ENCODE measurements at regions of chr7 and their contacts with region 1.

Region 1: GRCh38 chr7:3065724-3066143 is 22.1 kb upstream of the CARD11 start:
- DNase-seq: peak; percentile 82
- ATAC-seq: peak; percentile 39
- H3K4me3 ChIP-seq: no peak overlapping the region
- H3K4me3 Mint-ChIP-seq: peak overlapping the region; percentile 47
- H3K27ac ChIP-seq: peak overlapping the region in 1 of 2 donors; percentile 15
- H3K27ac Mint-ChIP-seq: peak overlapping the region; percentile 83
- H3K4me1 ChIP-seq: peaks cover 57 to 62% of the 10 kb centered on the region in 2 donors
- H3K4me1 Mint-ChIP-seq: peaks cover 69% of the 10 kb centered on the region
- H3K27me3 ChIP-seq: no peaks in the 10 kb centered on the region
- H3K27me3 Mint-ChIP-seq: no peaks in the 10 kb centered on the region
- CTCF ChIP-seq: peak; percentile 74

Region 2: GRCh38 chr7:2471396-2471795 is 594.3 kb before region 1 on chr7:
- CTCF ChIA-PET with region 1: no interaction called
- POLR2A ChIA-PET with region 1: no interaction called
- intact Hi-C with region 1: no loop called
- DNase-seq: no peak
- ATAC-seq: no peak
- H3K4me3 ChIP-seq: no peak overlapping the region
- H3K4me3 Mint-ChIP-seq: no peak overlapping the region
- H3K27ac ChIP-seq: no peak overlapping the region
- H3K27ac Mint-ChIP-seq: no peak overlapping the region
- H3K4me1 ChIP-seq: peaks cover 0 to 5% of the 10 kb centered on the region in 2 donors
- H3K4me1 Mint-ChIP-seq: peaks cover 4% of the 10 kb centered on the region
- H3K27me3 ChIP-seq: peaks cover 0 to 12% (median 2%) of the 10 kb centered on the region in 4 experiments
- H3K27me3 Mint-ChIP-seq: peaks cover 9% of the 10 kb centered on the region
- CTCF ChIP-seq: no peak

Region 3: GRCh38 chr7:2954433-2954853 is 111.3 kb before region 1 on chr7:
- CTCF ChIA-PET with region 1: interaction called, 3 read pairs
- POLR2A ChIA-PET with region 1: interaction called, 5 read pairs
- intact Hi-C with region 1: loop called (anchors 5 kb)
- DNase-seq: no peak
- ATAC-seq: peak; percentile 49
- H3K4me3 ChIP-seq: no peak overlapping the region
- H3K4me3 Mint-ChIP-seq: peak overlapping the region; percentile 26
- H3K27ac ChIP-seq: peak overlapping the region in 1 of 2 donors; percentile 63
- H3K27ac Mint-ChIP-seq: peak overlapping the region; percentile 74
- H3K4me1 ChIP-seq: peaks cover 37% of the 10 kb centered on the region in 2 donors
- H3K4me1 Mint-ChIP-seq: peaks cover 59% of the 10 kb centered on the region
- H3K27me3 ChIP-seq: no peaks in the 10 kb centered on the region
- H3K27me3 Mint-ChIP-seq: no peaks in the 10 kb centered on the region
- CTCF ChIP-seq: no peak

Region 4: GRCh38 chr7:3092468-3092867 is 26.7 kb after region 1 on chr7:
- CTCF ChIA-PET with region 1: interaction called, 22 read pairs
- POLR2A ChIA-PET with region 1: interaction called, 6 read pairs
- intact Hi-C with region 1: loop called (anchors 1 kb)
- DNase-seq: peak; percentile 83
- ATAC-seq: peak; percentile 86
- H3K4me3 ChIP-seq: peak overlapping the region in 1 of 5 experiments; percentile 20
- H3K4me3 Mint-ChIP-seq: peak overlapping the region; percentile 38
- H3K27ac ChIP-seq: peak overlapping the region; percentile 54 to 76
- H3K27ac Mint-ChIP-seq: peak overlapping the region; percentile 85
- H3K4me1 ChIP-seq: peaks cover 37 to 50% of the 10 kb centered on the region in 2 donors
- H3K4me1 Mint-ChIP-seq: peaks cover 45% of the 10 kb centered on the region
- H3K27me3 ChIP-seq: no peaks in the 10 kb centered on the region
- H3K27me3 Mint-ChIP-seq: no peaks in the 10 kb centered on the region
- CTCF ChIP-seq: no peak

Region 5: GRCh38 chr7:3154912-3155494 is 89.3 kb after region 1 on chr7:
- CTCF ChIA-PET with region 1: interaction called, 74 read pairs
- POLR2A ChIA-PET with region 1: no interaction called
- intact Hi-C with region 1: no loop called
- DNase-seq: peak; percentile 78
- ATAC-seq: peak; percentile 72
- H3K4me3 ChIP-seq: no peak overlapping the region
- H3K4me3 Mint-ChIP-seq: no peak overlapping the region
- H3K27ac ChIP-seq: no peak overlapping the region
- H3K27ac Mint-ChIP-seq: no peak overlapping the region
- H3K4me1 ChIP-seq: peaks cover 22 to 30% of the 10 kb centered on the region in 2 donors
- H3K4me1 Mint-ChIP-seq: peaks cover 33% of the 10 kb centered on the region
- H3K27me3 ChIP-seq: no peaks in the 10 kb centered on the region
- H3K27me3 Mint-ChIP-seq: peaks cover 8% of the 10 kb centered on the region
- CTCF ChIP-seq: peak; percentile 88

Region 6: DNA sequence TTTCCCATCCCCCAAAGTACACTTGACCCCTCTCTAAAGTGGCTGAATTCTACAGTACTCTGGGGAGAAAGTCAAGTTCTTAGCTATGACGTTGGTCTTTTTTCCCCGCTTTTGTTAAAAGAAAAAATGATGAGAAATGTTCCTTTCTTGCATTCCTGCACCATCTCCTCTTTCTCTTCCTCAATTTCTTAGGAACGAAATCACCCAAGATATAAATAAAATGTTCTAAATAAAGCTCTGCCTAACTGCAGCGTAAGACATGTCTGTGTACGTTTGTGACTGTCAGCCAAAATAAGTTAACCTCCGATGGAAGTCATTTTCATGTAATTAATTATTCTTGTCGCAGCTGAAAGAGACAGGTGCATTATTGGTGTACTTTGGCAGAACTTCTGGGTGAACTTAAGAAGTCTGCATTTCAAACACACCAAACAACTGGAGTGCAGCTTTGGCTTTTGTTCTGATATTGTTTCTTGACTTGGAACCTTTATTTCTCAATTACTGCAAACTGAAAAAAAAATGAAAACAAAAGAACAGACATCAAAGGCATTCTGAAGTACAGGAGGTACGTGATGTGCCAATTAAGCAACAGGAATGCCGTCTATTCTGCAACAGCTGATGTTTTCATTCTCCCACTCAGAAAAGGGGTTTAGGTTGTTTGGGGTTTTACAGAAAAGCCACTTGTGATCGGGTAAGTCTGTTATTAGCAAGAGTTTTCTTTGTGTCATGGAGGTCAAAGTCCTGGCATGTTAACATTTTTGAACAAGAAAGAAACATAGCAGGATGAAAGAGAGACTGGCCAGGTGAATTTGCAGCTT is 152.9 kb after region 1 on chr7:
- CTCF ChIA-PET with region 1: no interaction called
- POLR2A ChIA-PET with region 1: no interaction called
- intact Hi-C with region 1: no loop called
- DNase-seq: no peak
- ATAC-seq: no peak
- H3K4me3 ChIP-seq: no peak overlapping the region
- H3K4me3 Mint-ChIP-seq: no peak overlapping the region
- H3K27ac ChIP-seq: no peak overlapping the region
- H3K27ac Mint-ChIP-seq: no peak overlapping the region
- H3K4me1 ChIP-seq: no peaks in the 10 kb centered on the region
- H3K4me1 Mint-ChIP-seq: no peaks in the 10 kb centered on the region
- H3K27me3 ChIP-seq: peaks cover 0 to 4% (median 0%) of the 10 kb centered on the region in 4 experiments
- H3K27me3 Mint-ChIP-seq: peaks cover 13% of the 10 kb centered on the region
- CTCF ChIP-seq: no peak

Region 7: DNA sequence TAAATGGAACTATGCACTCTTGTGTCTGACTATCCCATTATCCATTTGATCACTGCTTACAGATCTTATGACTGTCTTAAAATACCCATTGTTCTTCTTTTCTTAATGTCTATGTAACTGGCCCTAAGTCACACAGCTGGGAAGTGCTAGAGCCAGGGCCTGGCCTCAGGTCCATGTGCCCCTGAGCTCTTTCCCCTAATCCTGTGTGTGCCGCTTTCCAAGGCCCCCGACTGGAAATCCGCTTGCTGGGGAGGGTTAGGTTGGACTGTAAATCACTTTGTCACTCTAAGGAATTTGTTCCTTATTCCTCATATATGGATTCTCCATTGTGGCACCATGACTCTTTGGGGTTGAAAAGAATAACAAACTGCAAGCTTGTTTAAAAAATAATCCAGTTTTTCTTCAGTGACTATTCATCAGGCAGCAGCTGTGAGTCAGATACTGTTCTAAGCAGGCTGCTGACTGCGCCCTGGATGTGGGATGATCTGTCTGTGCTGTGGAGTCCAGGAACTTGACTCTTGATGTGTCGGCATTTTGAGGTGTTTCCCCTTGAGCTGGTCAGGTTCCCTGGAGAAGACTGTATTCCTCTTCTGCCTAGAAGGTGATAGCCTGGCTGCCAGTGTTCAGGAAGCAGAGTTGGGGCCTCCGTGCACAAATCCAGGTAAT is 471.6 kb after region 1 on chr7:
- CTCF ChIA-PET with region 1: no interaction called
- POLR2A ChIA-PET with region 1: no interaction called
- intact Hi-C with region 1: no loop called
- DNase-seq: no peak
- ATAC-seq: no peak
- H3K4me3 ChIP-seq: no peak overlapping the region
- H3K4me3 Mint-ChIP-seq: no peak overlapping the region
- H3K27ac ChIP-seq: no peak overlapping the region
- H3K27ac Mint-ChIP-seq: no peak overlapping the region
- H3K4me1 ChIP-seq: no peaks in the 10 kb centered on the region
- H3K4me1 Mint-ChIP-seq: no peaks in the 10 kb centered on the region
- H3K27me3 ChIP-seq: no peaks in the 10 kb centered on the region
- H3K27me3 Mint-ChIP-seq: peaks cover 4% of the 10 kb centered on the region
- CTCF ChIP-seq: no peak

Measured in B cell (primary cell).